Activated CD4-positive, alpha-beta memory T cell treated with anti-CD3 and anti-CD28 coated beads, Interleukin-2, amount 10 ng/mL, durations not matched to agents 7 days and 5 days (primary cell): ENCODE measurements at regions of chr2 and their contacts with region 1.

Region 1: DNA sequence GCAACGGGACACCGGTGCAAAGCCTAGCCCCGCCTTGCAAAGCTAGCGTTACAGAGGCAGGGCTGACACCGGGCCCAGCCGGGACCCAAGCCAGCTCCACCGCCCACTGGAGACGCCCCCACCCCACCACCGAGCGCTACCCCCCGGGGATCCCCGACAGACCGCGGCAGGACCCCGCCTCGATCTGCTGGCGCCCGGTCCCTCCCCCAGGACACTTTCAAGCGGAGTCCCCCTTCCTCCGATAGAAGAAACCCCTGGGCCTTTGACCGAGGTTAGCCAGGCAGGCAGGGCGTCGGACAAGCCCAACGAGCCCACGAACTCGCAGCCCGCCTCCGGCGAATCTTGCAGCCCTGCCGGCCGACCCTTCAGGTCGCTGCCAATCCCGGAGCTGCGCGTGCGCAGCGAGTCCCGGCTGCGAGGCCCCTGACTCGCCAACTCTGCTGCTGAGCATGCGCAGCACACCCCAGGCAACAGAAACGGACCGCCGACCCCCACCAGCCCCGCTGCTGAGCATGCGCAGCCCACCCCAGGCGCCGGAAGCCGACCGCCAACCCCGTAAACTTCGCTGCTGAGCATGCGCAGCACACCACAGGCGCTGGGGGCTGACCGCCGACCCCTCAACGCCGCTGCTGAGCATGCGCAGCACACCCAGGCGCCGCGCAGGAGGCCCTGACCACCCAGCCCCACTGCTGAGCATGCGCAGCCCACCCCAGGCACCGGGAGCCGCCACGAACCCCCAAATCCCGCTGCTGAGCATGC is 656 bp downstream of the ADI1 start:
- DNase-seq: peak; percentile 98
- H3K4me3 Mint-ChIP-seq: peak overlapping the region; percentile 80
- H3K27ac Mint-ChIP-seq: peak overlapping the region; percentile 84
- H3K4me1 Mint-ChIP-seq: peaks cover 41% of the 10 kb centered on the region
- H3K27me3 Mint-ChIP-seq: no peaks in the 10 kb centered on the region

Region 2: GRCh38 chr2:3575534-3576262 is 57.0 kb after region 1 on chr2:
- CTCF ChIA-PET with region 1: interaction called, 3 read pairs
- POLR2A ChIA-PET with region 1: interaction called, 10 read pairs
- DNase-seq: peak; percentile 36
- H3K4me3 Mint-ChIP-seq: peak overlapping the region; percentile 92
- H3K27ac Mint-ChIP-seq: peak overlapping the region; percentile 83
- H3K4me1 Mint-ChIP-seq: peaks cover 55% of the 10 kb centered on the region
- H3K27me3 Mint-ChIP-seq: no peaks in the 10 kb centered on the region